Right ventricle myocardium inferior (tissue), 1 donor: ENCODE measurements at regions of chr10 and their contacts with region 1.

Region 1: DNA sequence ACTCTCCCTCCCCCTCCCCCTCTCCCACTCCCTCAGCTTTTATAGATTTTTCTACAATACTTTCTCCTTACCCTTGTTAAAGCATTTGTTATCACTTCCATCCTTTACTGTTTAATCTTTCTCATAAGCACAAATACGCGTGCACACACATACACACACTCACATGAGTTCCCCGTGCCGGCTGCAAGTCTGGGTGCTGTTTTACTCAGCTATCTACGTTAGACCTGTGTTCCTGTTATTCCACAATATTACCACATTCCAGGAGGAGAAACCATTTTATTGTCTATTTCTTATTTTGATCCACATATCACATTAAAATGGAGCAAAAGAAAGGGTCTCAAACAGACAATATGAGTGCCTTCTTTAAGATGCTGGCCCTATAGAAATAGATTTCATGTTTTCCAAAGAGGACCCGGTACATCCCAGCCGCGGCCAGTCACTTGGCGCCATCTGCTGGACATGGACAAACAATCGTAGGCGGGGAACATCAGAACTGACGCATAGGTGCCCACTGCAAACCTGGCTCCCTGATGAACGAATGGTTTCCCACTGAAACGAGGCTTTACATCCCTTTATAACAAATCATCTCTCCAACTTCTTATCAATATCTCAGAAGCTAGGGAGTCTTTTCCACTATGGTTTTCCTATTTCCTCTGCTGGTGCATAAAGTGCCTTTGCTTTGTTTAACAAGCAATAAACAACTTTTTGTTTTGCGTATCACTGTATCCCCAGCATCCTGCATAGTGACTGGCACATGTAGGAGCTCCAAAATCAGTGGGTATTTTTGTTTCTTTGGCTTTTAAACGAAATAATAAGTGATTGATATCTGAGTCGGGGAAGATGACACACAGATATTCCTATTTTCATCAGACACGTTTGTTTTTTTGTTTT is 25.2 kb upstream of the OPTN start:
- DNase-seq: no peak
- ATAC-seq: peak; percentile 76

Region 2: GRCh38 chr10:12720217-12720981 is 354.4 kb before region 1 on chr10:
- intact Hi-C with region 1: loop called (anchors 5 kb)
- DNase-seq: peak; percentile 86
- ATAC-seq: peak; percentile 88

Region 3: GRCh38 chr10:12984165-12984747 is 90.5 kb before region 1 on chr10:
- intact Hi-C with region 1: no loop called
- DNase-seq: no peak
- ATAC-seq: no peak